ENCODE measurements at regions of chr4 and their contacts with region 1.

Region 1: GRCh38 chr4:92265798-92266197 is 38.0 kb upstream of the GRID2 start:
- DNase-seq: no peak

Region 2: GRCh38 chr4:91936311-91936710 is 329.5 kb before region 1 on chr4:
- intact Hi-C with region 1: no loop called
- DNase-seq: no peak

Region 3: GRCh38 chr4:92251711-92252110 is 14.1 kb before region 1 on chr4:
- intact Hi-C with region 1: loop called in 1 of 2 experiments (anchors 1 kb)
- DNase-seq: no peak

Measured in posterior vena cava (tissue), 2 donors.